Activated CD4-positive, alpha-beta T cell treated with anti-CD3 and anti-CD28 coated beads for 36 hours (primary cell): ENCODE measurements at regions of chr3 and their contacts with region 1.

Region 1: GRCh38 chr3:188432802-188433520 is 279.0 kb downstream of the LPP start:
- DNase-seq: peak; percentile 8
- ATAC-seq: peak; percentile 58
- H3K4me3 Mint-ChIP-seq: peak overlapping the region; percentile 20
- H3K27ac Mint-ChIP-seq: peak overlapping the region; percentile 45
- H3K4me1 Mint-ChIP-seq: peaks cover 35% of the 10 kb centered on the region
- H3K27me3 Mint-ChIP-seq: no peaks in the 10 kb centered on the region

Region 2: DNA sequence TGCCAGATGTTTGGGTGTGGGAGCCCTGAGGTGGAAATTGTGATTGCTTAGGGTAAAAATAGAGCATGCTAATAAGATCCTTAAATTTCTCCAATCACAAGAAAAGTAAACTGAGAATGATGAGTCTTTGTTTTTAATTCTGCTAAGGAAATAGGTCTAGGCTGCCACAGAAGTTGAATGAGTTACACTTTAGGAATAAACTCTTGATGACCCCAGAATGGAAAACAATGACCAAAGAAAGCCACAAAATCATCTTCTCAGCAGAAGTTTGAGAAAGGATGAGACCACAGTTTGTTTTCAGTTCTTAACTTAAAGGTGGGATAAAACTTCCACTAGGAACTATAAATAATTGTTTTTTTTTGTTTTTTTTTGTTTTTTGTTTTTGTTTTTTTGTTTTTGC is 523.1 kb before region 1 on chr3:
- CTCF ChIA-PET with region 1: no interaction called
- POLR2A ChIA-PET with region 1: no interaction called
- intact Hi-C with region 1: no loop called
- DNase-seq: no peak
- ATAC-seq: no peak
- H3K4me3 Mint-ChIP-seq: no peak overlapping the region
- H3K27ac Mint-ChIP-seq: no peak overlapping the region
- H3K4me1 Mint-ChIP-seq: peaks cover 6% of the 10 kb centered on the region
- H3K27me3 Mint-ChIP-seq: peaks cover 2% of the 10 kb centered on the region

Region 3: GRCh38 chr3:188383748-188384147 is 49.2 kb before region 1 on chr3:
- CTCF ChIA-PET with region 1: no interaction called
- POLR2A ChIA-PET with region 1: no interaction called
- intact Hi-C with region 1: loop called in 1 of 2 experiments (anchors 5 kb)
- DNase-seq: no peak
- ATAC-seq: no peak
- H3K4me3 Mint-ChIP-seq: no peak overlapping the region
- H3K27ac Mint-ChIP-seq: no peak overlapping the region
- H3K4me1 Mint-ChIP-seq: peaks cover 18% of the 10 kb centered on the region
- H3K27me3 Mint-ChIP-seq: no peaks in the 10 kb centered on the region

Region 4: GRCh38 chr3:188489639-188490405 is 56.9 kb after region 1 on chr3:
- CTCF ChIA-PET with region 1: no interaction called
- POLR2A ChIA-PET with region 1: interaction called, 12 read pairs
- intact Hi-C with region 1: no loop called
- DNase-seq: no peak
- ATAC-seq: peak; percentile 58
- H3K4me3 Mint-ChIP-seq: no peak overlapping the region
- H3K27ac Mint-ChIP-seq: no peak overlapping the region
- H3K4me1 Mint-ChIP-seq: peaks cover 4% of the 10 kb centered on the region
- H3K27me3 Mint-ChIP-seq: no peaks in the 10 kb centered on the region

Region 5: DNA sequence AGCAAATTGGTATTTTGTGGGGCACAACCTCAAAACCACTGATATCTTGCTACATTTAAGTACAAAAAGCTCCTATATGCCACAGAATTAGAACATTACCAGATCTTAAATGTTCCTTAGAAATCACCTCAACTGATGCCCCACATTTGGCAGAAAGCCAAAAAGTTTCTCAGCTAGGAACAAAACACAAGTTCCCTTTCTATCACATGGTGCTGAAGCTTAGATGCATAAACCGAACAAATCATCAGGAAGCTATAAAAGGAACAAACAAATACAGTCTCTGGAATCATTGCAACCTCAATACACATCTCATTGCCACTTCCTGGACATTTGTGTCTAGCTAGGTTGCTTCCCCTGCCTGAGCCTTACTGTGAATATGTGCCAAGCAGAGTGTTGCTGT is 213.6 kb after region 1 on chr3:
- CTCF ChIA-PET with region 1: no interaction called
- POLR2A ChIA-PET with region 1: no interaction called
- intact Hi-C with region 1: no loop called
- DNase-seq: no peak
- ATAC-seq: no peak
- H3K4me3 Mint-ChIP-seq: no peak overlapping the region
- H3K27ac Mint-ChIP-seq: no peak overlapping the region
- H3K4me1 Mint-ChIP-seq: no peaks in the 10 kb centered on the region
- H3K27me3 Mint-ChIP-seq: no peaks in the 10 kb centered on the region